AG04450 (cell line): ENCODE measurements at regions of chr19 and their contacts with region 1.

Region 1: DNA sequence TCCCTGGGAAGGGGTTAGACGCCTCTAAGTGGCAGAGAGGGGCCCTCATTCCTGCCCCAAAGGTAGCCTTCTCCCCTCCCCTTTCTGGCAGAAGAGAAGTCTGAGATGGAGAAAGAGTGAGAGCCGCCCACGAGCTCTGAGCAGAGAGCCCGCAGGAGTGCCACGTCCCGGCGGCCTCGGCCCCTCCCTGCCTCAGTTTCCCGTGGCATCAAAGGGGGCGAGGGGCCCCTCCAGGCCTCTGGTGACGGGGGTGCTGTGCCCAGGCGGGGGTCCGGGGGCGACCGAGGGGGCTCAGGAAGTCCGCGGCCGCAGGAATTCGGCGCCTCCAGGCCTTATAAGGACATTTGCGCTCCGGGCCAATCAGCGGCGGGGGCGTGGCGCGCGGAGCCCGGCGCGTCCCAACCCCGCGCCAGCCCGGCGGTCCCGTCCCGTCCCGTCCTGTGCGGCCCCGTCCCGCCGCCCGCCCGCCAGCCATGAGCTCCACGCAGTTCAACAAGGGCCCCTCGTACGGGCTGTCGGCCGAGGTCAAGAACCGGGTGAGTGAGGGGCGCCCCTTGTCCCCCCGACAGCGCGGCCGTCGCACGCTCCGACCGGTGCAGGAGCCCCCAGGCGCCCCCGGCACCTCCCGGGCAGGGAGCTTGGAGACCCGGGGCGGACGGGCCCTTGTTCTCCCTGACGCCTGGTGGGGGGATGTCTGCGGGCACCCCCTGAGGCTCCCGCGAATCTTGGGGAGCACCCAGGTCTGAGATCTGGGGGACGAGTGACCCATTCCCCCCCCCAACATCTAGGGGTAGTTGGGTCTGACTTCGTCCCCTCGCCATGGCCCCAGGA is at the start of gene CNN2:
- DNase-seq: no peak
- H3K4me3 ChIP-seq: peak within 1 kb of the TSS; percentile 89
- H3K27ac ChIP-seq: peak within 1 kb of the TSS; percentile 98
- H3K27me3 ChIP-seq: no peaks in the 10 kb centered on the region
- CTCF ChIP-seq: no peak
- polyA plus RNA-seq, gene CNN2: 302 and 362 TPM in 2 replicates

Region 2: GRCh38 chr19:1039646-1040475 is 13.5 kb after region 1 on chr19 and contains the start of gene ABCA7:
- CTCF ChIA-PET with region 1: interaction called, 3 read pairs
- POLR2A ChIA-PET with region 1: interaction called, 126 read pairs
- DNase-seq: peak; percentile 95
- H3K4me3 ChIP-seq: peak within 1 kb of the TSS; percentile 65
- H3K27ac ChIP-seq: peak within 1 kb of the TSS; percentile 52
- H3K27me3 ChIP-seq: no peaks in the 10 kb centered on the region
- CTCF ChIP-seq: no peak; the same call in 1 of the 2 replicates
- polyA plus RNA-seq, gene ABCA7: 1.5 and 1.6 TPM in 2 replicates

Region 3: DNA sequence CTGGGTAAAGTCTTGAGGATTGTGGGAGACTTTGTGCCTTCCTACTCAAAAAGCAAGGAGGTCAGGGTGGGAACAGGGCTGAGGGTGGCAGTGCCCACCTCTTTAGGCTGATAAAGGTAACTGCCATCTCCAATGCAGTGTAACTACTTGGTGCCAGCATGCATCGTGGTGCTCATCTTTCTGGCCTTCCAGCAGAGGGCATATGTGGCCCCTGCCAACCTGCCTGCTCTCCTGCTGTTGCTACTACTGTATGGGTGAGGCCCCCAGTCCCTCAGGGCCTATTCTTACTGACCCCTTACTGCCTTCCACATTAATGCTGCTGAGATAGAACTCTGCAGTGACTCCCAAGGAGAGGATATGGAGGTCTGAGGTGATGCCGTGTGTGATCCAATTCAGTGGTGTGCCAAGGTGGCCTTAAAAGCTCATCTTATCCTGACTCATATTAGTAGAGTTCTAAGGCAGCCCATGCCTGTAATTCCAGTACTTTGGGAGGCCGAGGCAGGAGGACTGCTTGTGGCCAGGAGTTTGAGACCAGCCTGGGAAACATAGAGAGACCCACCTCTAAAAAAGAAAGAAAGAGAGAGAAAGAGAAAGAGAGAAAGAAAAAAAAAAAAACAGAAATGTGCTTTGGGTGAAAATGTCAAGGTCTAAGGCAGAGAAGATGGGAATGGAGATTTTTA is 30.9 kb after region 1 on chr19:
- CTCF ChIA-PET with region 1: no interaction called
- POLR2A ChIA-PET with region 1: no interaction called
- DNase-seq: no peak
- H3K4me3 ChIP-seq: no peak overlapping the region
- H3K27ac ChIP-seq: no peak overlapping the region
- H3K27me3 ChIP-seq: peaks cover 2% of the 10 kb centered on the region
- CTCF ChIP-seq: no peak